ENCODE measurements at regions of chr19 and their contacts with region 1.

Region 1: GRCh38 chr19:48290771-48291488 is 21.0 kb downstream of the ZNF114 start:
- DNase-seq: peak; percentile 64 to 77
- ATAC-seq: peak; percentile 57 to 78 (median 77)
- H3K4me3 ChIP-seq: peak overlapping the region; percentile 47
- H3K4me3 Mint-ChIP-seq: peak overlapping the region; percentile 74
- H3K27ac ChIP-seq: no peak overlapping the region
- H3K27ac Mint-ChIP-seq: no peak overlapping the region
- H3K4me1 ChIP-seq: peaks cover 11% of the 10 kb centered on the region
- H3K4me1 Mint-ChIP-seq: peaks cover 6 to 7% of the 10 kb centered on the region in 2 donors
- H3K27me3 ChIP-seq: peaks cover 3% of the 10 kb centered on the region
- H3K27me3 Mint-ChIP-seq: peaks cover 0 to 3% of the 10 kb centered on the region in 2 donors
- CTCF ChIP-seq: peak; percentile 98

Region 2: DNA sequence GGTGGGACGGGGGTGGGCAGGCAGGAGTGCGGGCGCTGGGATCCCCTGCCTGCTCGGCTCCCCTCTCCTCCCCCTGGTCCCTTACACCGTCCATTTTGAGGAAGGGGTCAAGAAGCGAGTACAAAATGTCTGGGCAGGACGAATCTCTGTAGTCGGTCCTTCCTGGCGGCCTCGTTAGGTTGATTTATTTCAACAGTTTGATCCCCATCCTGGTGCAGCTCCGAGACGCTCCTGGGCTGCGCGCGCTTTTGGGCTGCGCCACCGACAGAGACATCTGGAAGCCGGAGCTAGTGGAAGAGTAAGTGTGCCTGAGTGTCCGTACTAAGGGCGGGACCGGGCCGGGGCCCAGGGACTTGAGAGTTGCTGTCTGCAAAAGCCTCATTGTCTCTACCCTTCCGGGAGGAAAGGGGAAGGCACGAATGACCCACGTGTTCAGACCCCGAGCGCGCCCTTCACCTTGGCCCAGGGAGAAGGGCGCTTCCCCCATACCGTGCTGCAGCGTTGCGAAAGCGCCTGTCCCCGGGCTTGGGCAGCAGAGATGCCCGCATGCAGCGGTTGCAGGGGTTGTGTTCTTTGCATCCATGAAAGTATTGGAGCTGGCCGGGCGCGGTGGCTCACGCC is 19.3 kb before region 1 on chr19:
- intact Hi-C with region 1: loop called (anchors 1 kb)
- DNase-seq: peak in 1 of 2 donors; percentile 26
- ATAC-seq: peak; percentile 38 to 55 (median 41)
- H3K4me3 ChIP-seq: peak overlapping the region; percentile 42
- H3K4me3 Mint-ChIP-seq: peak overlapping the region; percentile 83
- H3K27ac ChIP-seq: no peak overlapping the region
- H3K27ac Mint-ChIP-seq: peak overlapping the region in 1 of 2 donors; percentile 70
- H3K4me1 ChIP-seq: peaks cover 16% of the 10 kb centered on the region
- H3K4me1 Mint-ChIP-seq: peaks cover 12 to 24% of the 10 kb centered on the region in 2 donors
- H3K27me3 ChIP-seq: no peaks in the 10 kb centered on the region
- H3K27me3 Mint-ChIP-seq: peaks cover 0 to 8% of the 10 kb centered on the region in 2 donors
- CTCF ChIP-seq: no peak

Region 3: GRCh38 chr19:48333467-48334384 is 42.8 kb after region 1 on chr19:
- intact Hi-C with region 1: no loop called
- DNase-seq: peak; percentile 93 to 97
- ATAC-seq: peak; percentile 67 to 85 (median 67)
- H3K4me3 ChIP-seq: peak overlapping the region; percentile 80
- H3K4me3 Mint-ChIP-seq: peak overlapping the region; percentile 99
- H3K27ac ChIP-seq: peak overlapping the region; percentile 98
- H3K27ac Mint-ChIP-seq: peak overlapping the region; percentile 100
- H3K4me1 ChIP-seq: peaks cover 55% of the 10 kb centered on the region
- H3K4me1 Mint-ChIP-seq: peaks cover 53 to 56% of the 10 kb centered on the region in 2 donors
- H3K27me3 ChIP-seq: no peaks in the 10 kb centered on the region
- H3K27me3 Mint-ChIP-seq: no peaks in the 10 kb centered on the region
- CTCF ChIP-seq: peak; percentile 82

Measured in natural killer cell (primary cell).